ENCODE measurements at regions of chr3 and their contacts with region 1.

Region 1: DNA sequence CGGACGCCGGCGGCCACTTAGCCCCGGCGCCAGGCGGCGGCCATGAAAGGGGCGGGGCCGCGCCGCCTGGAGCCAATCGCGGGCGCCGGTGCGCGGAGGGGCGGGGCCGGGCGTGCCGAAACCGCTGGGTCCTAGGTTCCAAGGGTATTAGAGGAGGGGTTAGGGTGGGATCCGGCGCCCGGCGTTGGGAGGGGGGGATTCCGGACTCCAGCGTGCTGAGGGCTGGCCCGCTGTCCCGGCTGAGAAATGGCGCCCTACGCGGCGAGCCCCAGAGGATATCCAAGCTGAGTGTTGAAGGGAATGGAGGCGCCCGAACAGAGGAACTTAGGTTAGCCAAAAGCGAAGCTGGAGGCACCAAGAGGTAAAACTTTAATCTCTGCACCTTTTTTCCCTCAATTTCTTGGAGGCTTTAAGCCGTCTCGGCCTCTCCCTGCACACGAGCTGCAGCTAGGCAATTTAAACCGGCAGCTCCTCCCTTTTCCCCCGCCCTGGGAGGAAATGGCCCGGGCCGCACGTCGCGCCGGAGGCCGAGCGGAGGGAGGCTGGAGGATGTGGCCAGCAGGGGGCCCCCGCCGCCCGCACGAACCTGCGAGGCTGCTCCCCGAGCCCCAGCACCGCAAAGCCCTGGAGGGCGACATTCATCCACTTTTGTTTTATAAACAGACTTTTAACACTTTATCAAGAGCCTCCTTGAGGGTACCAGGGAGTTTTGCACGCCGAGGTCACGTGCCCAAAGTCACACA is at the start of gene XXYLT1:
- DNase-seq: peak; percentile 87 to 92 (median 89)
- H3K4me3 ChIP-seq: peak within 1 kb of the TSS; percentile 82 to 90
- H3K4me3 Mint-ChIP-seq: peak within 1 kb of the TSS; percentile 85 to 93 (median 88)
- H3K27ac ChIP-seq: peak within 1 kb of the TSS; percentile 55
- H3K27ac Mint-ChIP-seq: peak within 1 kb of the TSS; percentile 77 to 94 (median 93)
- H3K4me1 ChIP-seq: peaks cover 25% of the 10 kb centered on the region
- H3K4me1 Mint-ChIP-seq: peaks cover 10 to 29% (median 23%) of the 10 kb centered on the region in 4 donors
- H3K27me3 ChIP-seq: no peaks in the 10 kb centered on the region
- H3K27me3 Mint-ChIP-seq: no peaks in the 10 kb centered on the region
- total RNA-seq, gene XXYLT1: 3.9 to 4.4 TPM

Region 2: GRCh38 chr3:194682694-194683310 is 588.5 kb before region 1 on chr3:
- CTCF ChIA-PET with region 1: interaction called, 25 read pairs
- POLR2A ChIA-PET with region 1: interaction called, 31 read pairs
- intact Hi-C with region 1: no loop called
- DNase-seq: peak; percentile 59 to 74 (median 69)
- H3K4me3 ChIP-seq: no peak overlapping the region
- H3K4me3 Mint-ChIP-seq: peak overlapping the region in 1 of 8 donors; percentile 23
- H3K27ac ChIP-seq: no peak overlapping the region
- H3K27ac Mint-ChIP-seq: peak overlapping the region in 2 of 7 donors; percentile 4 to 62
- H3K4me1 ChIP-seq: peaks cover 35% of the 10 kb centered on the region
- H3K4me1 Mint-ChIP-seq: peaks cover 16 to 42% (median 29%) of the 10 kb centered on the region in 4 donors
- H3K27me3 ChIP-seq: no peaks in the 10 kb centered on the region
- H3K27me3 Mint-ChIP-seq: no peaks in the 10 kb centered on the region

Region 3: DNA sequence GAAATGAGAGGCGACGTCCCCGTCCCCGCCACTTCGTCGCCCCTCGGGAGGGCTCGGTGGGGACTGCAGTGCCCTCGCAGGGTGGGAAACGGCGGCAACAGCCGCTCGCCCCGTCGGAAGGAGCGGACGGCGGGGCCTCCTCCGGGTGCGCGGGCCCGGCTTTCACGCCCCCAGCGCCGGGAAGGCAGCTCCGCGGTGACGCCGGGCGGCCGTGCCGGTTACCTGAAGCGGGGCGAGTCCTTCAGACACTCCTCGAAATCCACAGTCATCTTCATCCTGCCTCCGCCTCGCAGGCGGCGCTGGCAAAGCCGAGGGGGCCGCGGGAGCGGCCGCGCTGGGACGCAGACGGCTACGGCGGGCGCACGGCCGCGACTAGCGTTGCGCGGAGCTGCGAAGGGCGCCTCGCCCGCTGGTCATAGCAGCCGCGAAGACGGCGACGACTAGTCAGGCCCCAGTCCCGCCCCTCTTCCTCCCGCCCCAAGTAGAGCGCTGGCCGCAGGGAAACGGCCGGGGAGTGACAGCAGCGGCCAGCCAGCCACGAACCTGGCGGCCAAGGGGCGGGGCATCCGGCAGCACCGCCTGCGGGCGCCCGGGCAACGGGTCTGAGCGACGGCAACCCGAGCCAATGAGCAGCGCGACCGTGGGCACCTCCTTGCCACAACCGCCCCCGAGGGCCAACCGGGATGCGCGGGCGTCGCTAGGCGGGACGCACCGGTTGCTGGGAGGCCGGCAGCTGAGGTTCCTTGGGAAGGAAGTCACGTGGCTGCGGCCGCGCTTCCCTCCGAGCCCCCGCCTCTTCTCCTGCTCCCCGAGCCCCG is 171.5 kb after region 1 on chr3 and contains the start of gene ACAP2:
- CTCF ChIA-PET with region 1: interaction called, 35 read pairs
- POLR2A ChIA-PET with region 1: interaction called, 19 read pairs
- intact Hi-C with region 1: loop called (anchors 1 kb)
- DNase-seq: peak; percentile 97 to 99 (median 98)
- H3K4me3 ChIP-seq: peak within 1 kb of the TSS; percentile 82 to 87
- H3K4me3 Mint-ChIP-seq: peak within 1 kb of the TSS; percentile 93 to 97 (median 94)
- H3K27ac ChIP-seq: peak within 1 kb of the TSS; percentile 89
- H3K27ac Mint-ChIP-seq: peak within 1 kb of the TSS; percentile 91 to 96 (median 94)
- H3K4me1 ChIP-seq: peaks cover 54% of the 10 kb centered on the region
- H3K4me1 Mint-ChIP-seq: peaks cover 32 to 60% (median 43%) of the 10 kb centered on the region in 4 donors
- H3K27me3 ChIP-seq: no peaks in the 10 kb centered on the region
- H3K27me3 Mint-ChIP-seq: no peaks in the 10 kb centered on the region
- total RNA-seq, gene ACAP2: 72.3 to 73.5 TPM

Region 4: GRCh38 chr3:195517030-195517429 is 245.7 kb after region 1 on chr3:
- CTCF ChIA-PET with region 1: interaction called, 112 read pairs
- POLR2A ChIA-PET with region 1: interaction called, 33 read pairs
- intact Hi-C with region 1: loop called (anchors 1 kb)
- DNase-seq: no peak
- H3K4me3 ChIP-seq: no peak overlapping the region
- H3K4me3 Mint-ChIP-seq: no peak overlapping the region
- H3K27ac ChIP-seq: no peak overlapping the region
- H3K27ac Mint-ChIP-seq: no peak overlapping the region
- H3K4me1 ChIP-seq: peaks cover 5% of the 10 kb centered on the region
- H3K4me1 Mint-ChIP-seq: peaks cover 4 to 24% (median 17%) of the 10 kb centered on the region in 4 donors
- H3K27me3 ChIP-seq: no peaks in the 10 kb centered on the region
- H3K27me3 Mint-ChIP-seq: no peaks in the 10 kb centered on the region

Region 5: DNA sequence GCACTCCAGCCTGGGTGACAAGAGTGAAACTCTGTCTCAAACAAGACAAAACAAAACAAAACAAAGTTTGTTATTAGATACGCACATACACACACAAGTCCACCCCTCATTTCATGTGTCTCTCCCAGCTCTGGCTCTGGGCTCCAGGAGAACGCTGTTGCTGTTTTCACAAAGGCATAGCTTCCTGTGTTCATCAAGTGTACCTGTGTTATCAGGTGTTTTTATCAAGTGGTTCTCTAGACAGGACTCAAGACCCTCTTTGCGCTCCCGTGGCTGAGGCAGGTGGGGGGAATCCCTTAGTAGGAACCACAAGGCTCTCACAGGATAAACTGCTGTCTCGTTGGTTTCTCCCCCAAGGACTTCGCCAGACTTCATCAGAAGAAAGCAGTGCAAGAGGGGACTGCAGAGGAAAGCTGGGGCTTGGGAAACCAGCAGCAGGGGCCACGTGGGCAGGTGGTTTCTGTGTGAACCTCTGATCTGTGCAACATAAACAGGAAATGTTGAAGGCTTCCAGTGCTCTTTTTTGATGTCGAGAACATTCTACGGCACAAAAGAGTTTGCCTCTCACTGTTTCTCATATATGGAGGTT is 278.7 kb after region 1 on chr3:
- CTCF ChIA-PET with region 1: interaction called, 19 read pairs
- POLR2A ChIA-PET with region 1: interaction called, 19 read pairs
- intact Hi-C with region 1: loop called (anchors 2 kb)
- DNase-seq: peak; percentile 87 to 96 (median 90)
- H3K4me3 ChIP-seq: peak overlapping the region in 1 of 2 donors; percentile 74
- H3K4me3 Mint-ChIP-seq: peak overlapping the region; percentile 84 to 94 (median 90)
- H3K27ac ChIP-seq: peak overlapping the region; percentile 70
- H3K27ac Mint-ChIP-seq: peak overlapping the region; percentile 92 to 99 (median 96)
- H3K4me1 ChIP-seq: peaks cover 88% of the 10 kb centered on the region
- H3K4me1 Mint-ChIP-seq: peaks cover 56 to 93% (median 77%) of the 10 kb centered on the region in 4 donors
- H3K27me3 ChIP-seq: no peaks in the 10 kb centered on the region
- H3K27me3 Mint-ChIP-seq: no peaks in the 10 kb centered on the region

Measured in CD4-positive, alpha-beta memory T cell (primary cell).